Left colon (tissue), 2 donors: ENCODE measurements at regions of chr11 and their contacts with region 1.

Region 1: DNA sequence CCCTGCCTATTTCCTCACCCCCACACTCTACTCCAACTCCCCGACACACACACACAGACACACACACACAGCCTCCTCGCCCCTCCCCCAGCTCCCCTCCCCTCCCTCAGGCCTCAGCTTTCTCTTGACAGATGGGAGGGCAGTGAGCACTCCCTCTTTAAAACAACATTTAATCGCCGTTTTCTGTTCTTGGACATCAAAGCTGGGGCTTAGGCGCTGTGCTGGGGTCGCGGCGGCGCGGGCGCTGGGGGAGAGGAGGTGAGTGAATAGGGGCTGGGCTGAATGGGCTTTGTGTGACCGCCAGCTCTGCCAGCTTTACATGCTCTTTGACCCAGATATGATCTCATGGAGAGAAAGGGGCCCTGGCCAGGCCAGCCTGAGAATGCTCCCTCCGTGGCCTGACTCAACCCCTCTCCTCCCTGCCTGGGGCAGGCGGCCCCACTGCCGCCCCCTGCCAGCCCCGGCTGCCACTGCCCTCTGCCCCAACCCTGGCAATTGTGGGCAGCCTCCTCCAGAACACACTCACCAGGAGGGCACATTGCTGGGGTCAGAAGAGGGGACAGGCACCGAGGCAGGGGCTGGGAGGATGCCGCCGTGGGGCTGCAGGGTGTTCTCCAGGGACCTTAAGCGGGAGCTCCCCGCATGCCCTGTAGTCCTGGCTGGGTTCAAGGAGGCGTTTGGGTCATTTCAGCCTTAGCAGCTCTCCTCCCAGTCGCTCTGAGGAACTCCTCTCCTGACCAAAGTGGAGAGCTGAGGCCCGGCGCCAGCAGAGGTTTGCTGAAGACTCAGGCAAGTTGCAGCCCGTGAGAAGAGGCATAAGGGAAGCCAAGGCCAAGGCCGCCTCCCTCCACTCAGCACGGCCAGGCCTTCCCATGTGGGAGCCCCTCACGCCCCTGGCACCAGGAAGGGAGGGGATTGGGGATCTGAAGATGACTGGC is 38.3 kb upstream of the NNMT start:
- DNase-seq: no peak
- ATAC-seq: peak; percentile 8

Region 2: DNA sequence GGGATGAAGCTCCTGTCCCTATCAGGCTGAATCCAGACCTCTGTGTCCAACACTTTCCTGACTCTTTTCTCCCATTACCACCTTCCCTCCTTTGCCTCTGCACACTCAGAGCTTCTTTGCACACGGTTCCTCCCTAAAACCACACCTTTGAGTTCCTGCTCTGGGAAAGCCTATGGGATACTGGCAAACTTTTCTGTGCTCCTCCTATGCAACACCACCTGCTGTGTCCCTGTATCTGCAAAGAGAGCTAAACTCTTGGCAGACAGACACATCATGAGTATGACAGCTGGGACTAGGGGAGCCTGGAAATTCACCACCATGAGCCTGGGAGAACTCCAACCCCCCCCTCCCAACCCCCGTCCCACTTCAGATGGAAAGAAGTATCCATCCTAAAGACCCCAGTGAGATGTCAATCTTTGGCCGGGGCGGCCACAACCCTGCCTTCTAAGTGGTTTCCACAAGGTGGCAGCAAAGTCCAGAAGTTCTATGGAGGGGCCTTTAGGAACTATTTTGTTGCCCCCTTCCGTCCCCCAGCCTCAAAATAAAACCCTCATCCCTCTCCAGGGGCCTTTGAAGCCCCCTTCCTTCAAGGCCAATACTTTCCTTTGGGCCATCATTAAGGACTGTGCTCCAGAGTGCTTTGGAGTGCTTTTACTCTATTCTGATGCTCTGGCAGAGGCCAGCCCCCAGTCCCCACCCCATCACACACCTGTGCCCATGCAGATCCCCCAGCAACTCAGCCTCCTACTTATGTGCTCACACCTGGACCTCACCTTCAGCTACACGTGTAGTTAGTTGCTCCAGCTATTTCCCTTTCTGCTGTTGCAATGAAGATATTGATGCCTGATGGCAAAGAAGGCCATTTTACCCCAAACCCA is 263.6 kb before region 1 on chr11:
- intact Hi-C with region 1: loop called (anchors 5 kb)
- DNase-seq: peak in 1 of 2 donors; percentile 26
- ATAC-seq: peak; percentile 45

Region 3: DNA sequence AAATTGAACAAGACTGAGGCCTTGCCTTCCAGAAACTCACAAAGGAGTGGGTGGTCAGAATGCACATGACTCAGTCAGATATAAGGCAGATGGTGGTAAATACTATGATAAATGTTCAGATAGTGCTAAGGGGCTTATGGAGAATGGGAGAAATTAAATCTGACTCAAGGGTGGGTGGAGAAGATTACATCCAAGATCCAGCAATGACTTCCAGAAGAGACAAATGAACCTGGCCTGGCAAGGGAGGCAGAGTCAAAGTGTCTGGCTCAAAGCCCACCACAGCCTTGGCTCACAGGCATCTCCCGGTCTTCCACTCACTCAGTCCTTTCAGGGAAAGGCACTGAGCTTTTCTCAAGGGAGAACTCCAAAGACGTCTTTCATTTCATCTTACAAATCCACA is 204.5 kb before region 1 on chr11:
- intact Hi-C with region 1: loop called in 1 of 2 experiments (anchors 5 kb)
- DNase-seq: no peak
- ATAC-seq: no peak

Region 4: DNA sequence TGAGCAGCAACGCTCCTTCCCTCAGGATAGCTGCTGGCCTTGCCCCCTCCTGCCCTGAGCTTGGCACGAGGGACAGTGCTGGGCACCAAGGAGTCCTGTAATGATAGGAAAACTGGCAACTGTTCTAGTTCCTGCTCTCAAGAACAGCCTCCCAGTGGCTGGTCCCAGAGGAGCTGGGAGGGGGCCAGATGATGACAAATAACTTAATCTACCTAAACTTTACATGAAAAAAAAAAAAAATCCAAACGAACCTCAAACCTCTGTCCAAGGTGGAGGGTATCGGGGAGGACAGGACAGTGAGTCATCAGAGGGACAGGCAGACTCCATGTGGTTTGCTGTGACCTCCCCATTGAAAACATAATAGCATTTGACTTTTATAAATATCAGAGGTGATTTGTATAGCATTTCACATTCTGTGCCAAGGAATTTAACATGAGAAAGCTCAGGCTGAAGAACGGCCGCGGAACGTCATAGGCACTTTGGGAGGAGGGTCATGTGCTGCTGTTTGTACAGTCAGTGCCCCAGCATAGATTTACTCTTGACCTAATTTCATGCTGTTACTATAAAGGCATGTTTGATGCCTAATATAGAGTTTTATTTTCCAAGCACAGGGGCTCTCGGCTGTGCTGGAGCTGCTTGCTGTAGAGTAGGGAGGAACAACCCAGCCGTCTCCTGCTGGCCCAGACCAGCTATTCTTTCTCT is 59.9 kb before region 1 on chr11:
- intact Hi-C with region 1: no loop called
- DNase-seq: peak in 1 of 2 donors; percentile 75
- ATAC-seq: peak; percentile 49